ENCODE measurements at regions of chr12 and their contacts with region 1.

Region 1: GRCh38 chr12:111812881-111813741 is 28.9 kb upstream of the MAPKAPK5 start:
- DNase-seq: peak; percentile 80 to 82
- H3K4me3 ChIP-seq: no peak overlapping the region
- H3K27ac ChIP-seq: no peak overlapping the region
- H3K4me1 ChIP-seq: peaks cover 10% of the 10 kb centered on the region in 2 donors
- H3K27me3 ChIP-seq: no peaks in the 10 kb centered on the region
- CTCF ChIP-seq: peak; percentile 31 to 91 (median 84)
- POLR2A ChIP-seq: no peak

Region 2: DNA sequence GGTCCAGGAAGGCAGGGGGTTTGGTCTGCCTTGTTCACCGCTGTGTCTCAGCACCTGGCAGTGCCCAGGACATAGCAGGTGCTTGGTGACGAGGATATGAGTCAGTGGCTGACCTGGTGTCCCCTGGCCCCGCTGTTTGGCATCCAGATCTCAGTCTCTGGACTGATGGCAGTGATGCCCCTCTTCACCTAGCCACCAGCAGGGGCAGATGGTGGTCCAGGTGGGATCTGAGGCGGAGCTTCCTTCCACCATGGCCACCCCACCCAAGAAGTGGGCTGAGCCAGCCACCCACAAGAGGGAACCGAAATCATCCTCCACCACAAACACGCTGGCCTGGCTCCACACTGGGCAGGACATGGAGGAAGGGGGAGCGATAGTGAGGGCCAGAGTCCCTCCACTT is 423.5 kb before region 1 on chr12:
- intact Hi-C with region 1: no loop called
- DNase-seq: no peak
- H3K4me3 ChIP-seq: no peak overlapping the region
- H3K27ac ChIP-seq: no peak overlapping the region
- H3K4me1 ChIP-seq: no peaks in the 10 kb centered on the region
- H3K27me3 ChIP-seq: no peaks in the 10 kb centered on the region
- CTCF ChIP-seq: no peak
- POLR2A ChIP-seq: no peak

Region 3: GRCh38 chr12:111544032-111544431 is 269.1 kb before region 1 on chr12:
- intact Hi-C with region 1: no loop called
- DNase-seq: no peak
- H3K4me3 ChIP-seq: no peak overlapping the region
- H3K27ac ChIP-seq: no peak overlapping the region
- H3K4me1 ChIP-seq: no peaks in the 10 kb centered on the region
- H3K27me3 ChIP-seq: no peaks in the 10 kb centered on the region
- CTCF ChIP-seq: no peak
- POLR2A ChIP-seq: no peak

Region 4: DNA sequence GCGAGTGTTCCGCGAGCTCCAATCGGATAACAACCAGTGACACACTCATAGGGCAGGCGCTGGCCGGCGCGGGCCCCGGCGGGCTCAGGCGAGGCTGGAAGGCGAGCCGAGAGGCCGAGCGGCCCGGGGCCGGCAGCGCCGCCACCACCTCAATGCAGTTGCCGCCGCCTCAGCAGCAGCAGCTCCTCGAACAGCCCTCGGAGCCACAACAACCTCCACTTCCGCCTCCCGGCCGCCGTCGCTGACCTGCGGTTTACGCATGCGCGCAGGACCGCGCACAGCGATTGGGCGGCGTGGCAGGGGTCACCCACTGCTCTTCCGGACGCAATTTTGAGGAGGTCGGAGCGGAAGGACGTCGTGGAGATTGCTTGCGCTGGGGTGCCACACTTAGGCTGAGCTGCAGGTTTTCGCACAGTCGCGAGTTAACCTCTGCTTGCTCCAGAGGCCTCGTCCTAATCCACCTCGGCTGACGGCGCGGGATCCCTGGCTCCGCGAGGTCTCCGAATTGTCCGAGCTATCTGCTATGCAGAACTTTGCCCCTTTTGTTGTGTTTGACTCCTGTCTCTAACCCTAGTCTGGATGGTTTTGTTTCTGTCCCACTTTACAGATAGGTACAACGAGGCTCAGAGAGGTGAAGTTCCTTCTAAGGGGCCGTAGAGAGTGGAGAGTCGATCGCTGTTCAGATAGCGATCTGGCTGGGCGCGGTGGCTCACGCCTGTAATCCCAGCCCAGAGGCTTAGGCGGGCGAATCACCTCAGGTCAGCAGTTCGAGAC is 127.2 kb before region 1 on chr12 and contains the starts of genes ACAD10 and BRAP:
- intact Hi-C with region 1: loop called (anchors 10 kb)
- DNase-seq: peak; percentile 92 to 94
- H3K4me3 ChIP-seq: peak within 1 kb of the TSS; percentile 43 to 93 (median 92)
- H3K27ac ChIP-seq: peak within 1 kb of the TSS; percentile 50 to 79 (median 76)
- H3K4me1 ChIP-seq: peaks cover 20 to 21% of the 10 kb centered on the region in 2 donors
- H3K27me3 ChIP-seq: no peaks in the 10 kb centered on the region
- CTCF ChIP-seq: peak in 1 of 6 experiments; percentile 18
- POLR2A ChIP-seq: peak in 1 of 2 donors; percentile 87
- total RNA-seq, gene ACAD10: 43.0 to 65.5 (median 52.8) TPM
- total RNA-seq, gene BRAP: 18.4 to 23.5 (median 21.9) TPM

Region 5: GRCh38 chr12:111753144-111753881 is 59.8 kb before region 1 on chr12:
- intact Hi-C with region 1: loop called (anchors 2 kb)
- DNase-seq: peak; percentile 60 to 61
- H3K4me3 ChIP-seq: no peak overlapping the region
- H3K27ac ChIP-seq: no peak overlapping the region
- H3K4me1 ChIP-seq: peaks cover 11 to 14% of the 10 kb centered on the region in 2 donors
- H3K27me3 ChIP-seq: no peaks in the 10 kb centered on the region
- CTCF ChIP-seq: peak; percentile 51 to 75 (median 72)
- POLR2A ChIP-seq: no peak

Region 6: DNA sequence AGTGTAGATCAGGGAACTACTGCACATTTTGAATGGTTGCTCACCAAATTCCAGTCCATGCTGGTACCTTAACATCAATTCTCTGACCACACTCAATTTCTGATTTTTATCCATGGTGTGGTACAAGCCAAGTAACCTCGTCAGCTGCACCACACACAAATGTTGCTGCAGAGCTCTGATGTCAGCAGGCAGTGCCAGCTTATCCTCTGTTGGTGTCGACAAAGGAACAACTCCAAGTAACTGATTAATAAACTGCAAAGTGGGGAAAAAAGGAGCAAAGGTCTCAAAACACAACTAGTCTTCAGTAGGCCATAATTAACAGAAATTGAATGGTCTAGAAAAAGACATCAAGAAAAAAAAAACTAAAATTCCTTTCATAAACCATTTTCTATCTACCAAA is 248.0 kb after region 1 on chr12:
- intact Hi-C with region 1: no loop called
- DNase-seq: no peak
- H3K4me3 ChIP-seq: no peak overlapping the region
- H3K27ac ChIP-seq: no peak overlapping the region
- H3K4me1 ChIP-seq: peaks cover 0 to 7% of the 10 kb centered on the region in 2 donors
- H3K27me3 ChIP-seq: no peaks in the 10 kb centered on the region
- CTCF ChIP-seq: no peak
- POLR2A ChIP-seq: no peak

Measured in thyroid gland (tissue), 4 donors.